Activated T-helper 1 cell treated with anti-CD3 and anti-CD28 coated beads, Interleukin-12 subunit alpha, Interleukin-12 subunit beta, Interleukin-2, Interleukin-4 antibody, amounts not matched to agents 30 ng/mL and 10 ng/mL and 1 ng/mL, durations not matched to agents 14 hours and 24 hours and 36 hours (primary cell): ENCODE measurements at regions of chr18 and their contacts with region 1.

Region 1: GRCh38 chr18:46073474-46074331 is 1.6 kb upstream of the PSTPIP2 start:
- DNase-seq: peak; percentile 47
- H3K4me3 Mint-ChIP-seq: peak overlapping the region; percentile 32
- H3K27ac Mint-ChIP-seq: peak overlapping the region; percentile 14
- H3K4me1 Mint-ChIP-seq: peaks cover 42% of the 10 kb centered on the region
- H3K27me3 Mint-ChIP-seq: peaks cover 3% of the 10 kb centered on the region

Region 2: GRCh38 chr18:45690975-45691815 is 382.5 kb before region 1 on chr18:
- intact Hi-C with region 1: loop called (anchors 1 kb)
- DNase-seq: peak; percentile 55
- H3K4me3 Mint-ChIP-seq: no peak overlapping the region
- H3K27ac Mint-ChIP-seq: no peak overlapping the region
- H3K4me1 Mint-ChIP-seq: peaks cover 31% of the 10 kb centered on the region
- H3K27me3 Mint-ChIP-seq: peaks cover 44% of the 10 kb centered on the region

Region 3: GRCh38 chr18:45910405-45911023 is 163.2 kb before region 1 on chr18:
- intact Hi-C with region 1: loop called (anchors 1 kb)
- DNase-seq: peak; percentile 25
- H3K4me3 Mint-ChIP-seq: no peak overlapping the region
- H3K27ac Mint-ChIP-seq: no peak overlapping the region
- H3K4me1 Mint-ChIP-seq: no peaks in the 10 kb centered on the region
- H3K27me3 Mint-ChIP-seq: no peaks in the 10 kb centered on the region

Region 4: GRCh38 chr18:45957100-45957499 is 116.6 kb before region 1 on chr18:
- intact Hi-C with region 1: no loop called
- DNase-seq: no peak
- H3K4me3 Mint-ChIP-seq: no peak overlapping the region
- H3K27ac Mint-ChIP-seq: no peak overlapping the region
- H3K4me1 Mint-ChIP-seq: peaks cover 28% of the 10 kb centered on the region
- H3K27me3 Mint-ChIP-seq: no peaks in the 10 kb centered on the region

Region 5: GRCh38 chr18:45974088-45974536 is 99.6 kb before region 1 on chr18:
- intact Hi-C with region 1: loop called (anchors 1 kb)
- DNase-seq: peak; percentile 51
- H3K4me3 Mint-ChIP-seq: no peak overlapping the region
- H3K27ac Mint-ChIP-seq: no peak overlapping the region
- H3K4me1 Mint-ChIP-seq: peaks cover 7% of the 10 kb centered on the region
- H3K27me3 Mint-ChIP-seq: peaks cover 4% of the 10 kb centered on the region

Region 6: GRCh38 chr18:46028536-46028891 is 45.2 kb before region 1 on chr18:
- intact Hi-C with region 1: loop called (anchors 2 kb)
- DNase-seq: no peak
- H3K4me3 Mint-ChIP-seq: peak overlapping the region; percentile 86
- H3K27ac Mint-ChIP-seq: peak overlapping the region; percentile 59
- H3K4me1 Mint-ChIP-seq: peaks cover 14% of the 10 kb centered on the region
- H3K27me3 Mint-ChIP-seq: peaks cover 21% of the 10 kb centered on the region